ENCODE measurements at regions of chr20 and their contacts with region 1.

Region 1: DNA sequence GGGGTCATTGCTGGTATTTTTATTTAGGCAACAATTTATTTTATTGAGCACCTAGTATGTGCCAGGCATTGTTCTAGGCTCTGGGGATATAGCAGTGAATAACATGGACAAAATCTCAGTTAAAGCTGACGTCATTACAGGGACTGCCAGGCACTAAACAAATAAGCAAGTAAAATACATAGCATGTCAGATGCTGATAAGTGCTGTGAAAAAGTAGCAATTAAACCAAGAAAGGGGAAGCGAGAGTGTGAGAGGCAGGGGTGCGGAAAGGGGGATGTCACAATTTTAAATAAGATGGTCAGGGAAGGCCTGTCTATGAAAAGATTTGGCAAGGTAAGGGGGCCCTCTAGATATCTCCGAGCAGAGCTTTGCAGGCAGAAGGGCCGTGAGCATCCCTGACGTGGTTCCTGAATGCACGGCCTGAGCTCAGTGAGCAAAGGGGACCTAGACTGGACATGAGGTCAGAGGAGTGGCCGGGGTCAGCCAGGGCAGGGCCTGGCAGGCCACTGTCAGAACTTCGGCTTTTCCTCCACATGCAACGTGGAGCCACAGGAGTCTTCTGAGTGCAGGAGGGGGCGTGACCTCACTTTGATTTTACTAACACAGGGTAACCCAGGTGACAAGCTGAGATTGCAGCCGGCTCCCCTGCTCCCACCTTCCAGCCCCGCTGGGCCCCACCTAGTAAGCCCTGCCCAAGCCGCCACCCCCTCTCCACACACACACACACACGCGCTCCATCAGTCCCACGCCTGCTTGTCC is 24.2 kb upstream of the SIRPA start:
- DNase-seq: peak; percentile 71
- ATAC-seq: peak; percentile 87
- H3K4me3 ChIP-seq: no peak overlapping the region
- H3K27ac ChIP-seq: peak overlapping the region; percentile 20; the same call in 1 of the 2 replicates
- H3K4me1 ChIP-seq: peaks cover 21% of the 10 kb centered on the region
- H3K27me3 ChIP-seq: no peaks in the 10 kb centered on the region
- CTCF ChIP-seq: peak in 1 of 3 experiments; percentile 15; a peak in 1 of 6 replicates
- EP300 ChIP-seq: peak; percentile 79 to 84; a peak in 3 of 4 replicates
- POLR2A ChIP-seq: no peak
- RAD21 ChIP-seq: no peak

Region 2: GRCh38 chr20:1853473-1853872 is 17.5 kb before region 1 on chr20:
- CTCF ChIA-PET with region 1: interaction called, 5 read pairs
- POLR2A ChIA-PET with region 1: interaction called, 5 read pairs
- RAD21 ChIA-PET with region 1: interaction called, 5 read pairs
- SMC1A ChIA-PET with region 1: interaction called, 13 read pairs
- in situ Hi-C with region 1: no loop called
- intact Hi-C with region 1: loop called (anchors 2 kb)
- DNase-seq: no peak
- ATAC-seq: no peak
- H3K4me3 ChIP-seq: no peak overlapping the region
- H3K27ac ChIP-seq: no peak overlapping the region
- H3K4me1 ChIP-seq: peaks cover 14% of the 10 kb centered on the region
- H3K27me3 ChIP-seq: no peaks in the 10 kb centered on the region
- CTCF ChIP-seq: no peak
- EP300 ChIP-seq: no peak
- POLR2A ChIP-seq: no peak
- RAD21 ChIP-seq: no peak

Region 3: DNA sequence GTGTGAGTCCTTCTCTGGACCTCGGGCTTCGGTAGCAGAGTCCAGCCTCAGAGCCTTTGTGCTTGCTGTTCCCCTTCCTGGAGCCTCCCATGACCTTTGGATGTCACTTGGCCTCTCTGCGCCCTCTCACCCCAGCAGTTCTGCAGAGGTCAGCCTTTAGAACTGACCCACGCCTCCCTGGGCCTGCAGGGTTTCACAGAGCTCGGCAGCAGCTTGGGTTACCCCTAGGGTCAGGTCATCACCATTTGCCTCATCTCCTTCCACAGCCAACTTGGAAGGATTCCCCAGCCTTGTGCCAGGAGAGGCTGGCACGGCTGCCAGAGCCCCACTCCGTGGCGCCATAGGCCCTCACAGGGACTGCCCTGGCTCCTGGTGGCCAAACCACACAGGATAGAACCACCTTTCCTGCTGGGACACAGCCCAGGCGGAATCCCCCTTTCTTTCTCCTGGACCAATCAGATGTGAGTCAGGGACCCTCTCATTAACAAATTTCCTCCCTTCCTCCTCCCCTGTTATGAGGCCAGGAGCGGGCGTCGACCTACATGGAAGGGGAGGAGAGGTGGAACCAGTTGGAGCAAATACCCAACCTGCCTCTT is 10.4 kb after region 1 on chr20:
- CTCF ChIA-PET with region 1: no interaction called
- POLR2A ChIA-PET with region 1: no interaction called
- RAD21 ChIA-PET with region 1: no interaction called
- SMC1A ChIA-PET with region 1: no interaction called
- in situ Hi-C with region 1: no loop called
- intact Hi-C with region 1: no loop called
- DNase-seq: no peak
- ATAC-seq: no peak
- H3K4me3 ChIP-seq: no peak overlapping the region
- H3K27ac ChIP-seq: no peak overlapping the region
- H3K4me1 ChIP-seq: peaks cover 5% of the 10 kb centered on the region; the same call in 1 of the 2 replicates
- H3K27me3 ChIP-seq: no peaks in the 10 kb centered on the region
- CTCF ChIP-seq: no peak
- EP300 ChIP-seq: no peak
- POLR2A ChIP-seq: no peak
- RAD21 ChIP-seq: no peak

Region 4: DNA sequence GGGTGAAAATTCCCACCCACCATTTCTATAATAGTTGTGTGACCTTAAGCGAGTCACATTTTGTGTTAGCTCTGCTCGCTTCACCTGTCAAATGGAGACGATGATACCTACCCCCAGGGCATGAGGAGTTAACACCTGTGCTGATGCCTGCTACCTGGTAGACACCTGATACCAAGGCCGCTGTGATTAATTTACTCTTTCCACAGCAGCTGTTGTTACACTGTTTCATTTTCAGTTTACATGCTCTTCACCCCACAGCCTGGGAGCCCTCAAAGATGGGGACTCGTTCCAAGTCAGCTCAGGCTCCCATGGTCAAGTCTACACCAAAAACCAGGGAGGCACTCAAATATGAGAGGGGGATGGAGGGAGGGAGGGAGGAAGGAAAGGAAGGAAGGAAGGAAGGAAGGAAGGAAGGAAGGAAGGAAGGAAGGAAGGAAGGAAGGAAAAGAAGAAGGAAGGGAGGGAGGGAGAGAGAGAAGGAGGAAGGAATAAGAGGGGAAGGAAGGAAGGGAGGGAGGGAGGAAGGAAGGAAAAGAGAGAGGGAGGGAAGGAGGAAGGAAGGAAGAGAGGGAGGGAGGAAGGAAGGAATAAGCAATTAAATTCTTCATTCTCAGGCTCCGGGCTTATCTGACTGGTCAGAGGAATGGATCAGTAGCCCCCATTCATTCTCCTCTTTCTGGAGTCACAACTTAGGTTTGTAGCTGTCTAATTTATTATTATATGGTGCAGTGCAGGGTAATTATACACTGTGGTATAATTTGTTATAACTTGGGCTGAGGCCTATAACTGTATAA is 82.0 kb after region 1 on chr20:
- CTCF ChIA-PET with region 1: no interaction called
- POLR2A ChIA-PET with region 1: no interaction called
- RAD21 ChIA-PET with region 1: no interaction called
- SMC1A ChIA-PET with region 1: interaction called, 10 read pairs
- in situ Hi-C with region 1: no loop called
- intact Hi-C with region 1: no loop called
- DNase-seq: peak; percentile 15
- ATAC-seq: peak; percentile 82
- H3K4me3 ChIP-seq: no peak overlapping the region
- H3K27ac ChIP-seq: no peak overlapping the region
- H3K4me1 ChIP-seq: peaks cover 18% of the 10 kb centered on the region
- H3K27me3 ChIP-seq: no peaks in the 10 kb centered on the region
- CTCF ChIP-seq: no peak
- EP300 ChIP-seq: no peak
- POLR2A ChIP-seq: no peak
- RAD21 ChIP-seq: no peak

Region 5: DNA sequence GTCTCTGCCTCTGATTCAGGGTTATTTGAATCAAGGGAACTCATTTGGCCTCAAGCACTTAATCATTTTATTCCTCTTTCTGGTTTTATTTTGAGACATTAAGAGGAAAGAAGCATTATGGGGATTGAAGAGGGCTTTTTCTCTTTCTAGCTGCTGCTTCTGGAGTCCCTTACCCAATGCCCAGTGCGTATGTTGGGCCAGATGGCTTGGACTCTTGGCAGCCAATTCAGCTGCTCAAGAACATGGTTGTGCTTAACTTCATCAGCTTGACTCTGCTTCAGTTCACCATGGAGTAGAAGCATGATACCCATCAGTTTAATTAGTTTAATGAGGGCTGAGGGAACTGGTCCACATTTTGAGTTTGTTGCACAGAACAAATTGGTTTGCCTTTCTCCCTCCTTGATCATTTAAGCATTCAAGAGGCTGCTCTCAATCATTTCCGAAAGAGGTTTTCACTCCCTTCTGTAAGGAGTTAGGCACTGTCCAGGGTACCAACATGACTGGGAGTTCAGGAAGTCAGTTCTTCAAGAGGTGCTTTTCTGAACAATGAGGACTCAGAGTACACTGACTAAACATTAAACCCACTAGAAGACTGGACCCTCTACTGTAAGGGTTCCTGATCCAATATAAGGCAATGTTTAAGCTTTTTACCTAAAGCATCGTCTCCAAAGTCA is 108.3 kb after region 1 on chr20:
- CTCF ChIA-PET with region 1: no interaction called
- POLR2A ChIA-PET with region 1: no interaction called
- RAD21 ChIA-PET with region 1: no interaction called
- SMC1A ChIA-PET with region 1: no interaction called
- in situ Hi-C with region 1: no loop called
- intact Hi-C with region 1: no loop called
- DNase-seq: no peak
- ATAC-seq: no peak
- H3K4me3 ChIP-seq: no peak overlapping the region
- H3K27ac ChIP-seq: no peak overlapping the region
- H3K4me1 ChIP-seq: no peaks in the 10 kb centered on the region
- H3K27me3 ChIP-seq: peaks cover 0 to 5% of the 10 kb centered on the region in 2 experiments; a peak in 3 of 4 replicates
- CTCF ChIP-seq: no peak
- EP300 ChIP-seq: no peak
- POLR2A ChIP-seq: no peak
- RAD21 ChIP-seq: no peak